Esophagus muscularis mucosa (tissue), 4 donors: ENCODE measurements at regions of chr17 and their contacts with region 1.

Region 1: DNA sequence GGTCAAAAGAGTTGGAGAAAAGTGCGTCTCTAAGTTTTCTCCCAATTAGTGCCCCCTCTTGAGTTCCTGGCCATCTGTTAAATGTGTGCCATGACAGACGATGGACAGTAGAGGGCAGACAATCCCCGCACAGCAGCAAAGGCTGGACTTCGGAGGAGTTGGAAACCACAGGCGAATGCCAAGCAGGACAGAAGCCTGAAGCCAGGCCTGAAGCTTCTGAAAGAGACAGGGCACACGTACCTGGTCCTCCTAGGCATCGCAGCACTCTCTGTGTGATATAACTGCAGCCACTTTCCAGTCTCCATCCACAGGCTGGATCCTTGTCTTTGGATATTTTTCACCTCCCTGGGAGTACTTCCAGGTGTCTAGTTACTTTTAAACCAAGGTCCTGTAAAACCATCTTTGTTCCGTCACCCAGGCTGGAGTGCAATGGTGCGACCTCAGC is 14.5 kb downstream of the C17orf100 start:
- DNase-seq: no peak
- H3K4me3 ChIP-seq: no peak overlapping the region
- H3K27ac ChIP-seq: no peak overlapping the region
- H3K4me1 ChIP-seq: peaks cover 0 to 3% (median 0%) of the 10 kb centered on the region in 4 donors
- H3K27me3 ChIP-seq: peaks cover 0 to 48% (median 0%) of the 10 kb centered on the region in 4 donors
- CTCF ChIP-seq: peak; percentile 82 to 92 (median 88)
- EP300 ChIP-seq: no peak
- POLR2A ChIP-seq: no peak

Region 2: DNA sequence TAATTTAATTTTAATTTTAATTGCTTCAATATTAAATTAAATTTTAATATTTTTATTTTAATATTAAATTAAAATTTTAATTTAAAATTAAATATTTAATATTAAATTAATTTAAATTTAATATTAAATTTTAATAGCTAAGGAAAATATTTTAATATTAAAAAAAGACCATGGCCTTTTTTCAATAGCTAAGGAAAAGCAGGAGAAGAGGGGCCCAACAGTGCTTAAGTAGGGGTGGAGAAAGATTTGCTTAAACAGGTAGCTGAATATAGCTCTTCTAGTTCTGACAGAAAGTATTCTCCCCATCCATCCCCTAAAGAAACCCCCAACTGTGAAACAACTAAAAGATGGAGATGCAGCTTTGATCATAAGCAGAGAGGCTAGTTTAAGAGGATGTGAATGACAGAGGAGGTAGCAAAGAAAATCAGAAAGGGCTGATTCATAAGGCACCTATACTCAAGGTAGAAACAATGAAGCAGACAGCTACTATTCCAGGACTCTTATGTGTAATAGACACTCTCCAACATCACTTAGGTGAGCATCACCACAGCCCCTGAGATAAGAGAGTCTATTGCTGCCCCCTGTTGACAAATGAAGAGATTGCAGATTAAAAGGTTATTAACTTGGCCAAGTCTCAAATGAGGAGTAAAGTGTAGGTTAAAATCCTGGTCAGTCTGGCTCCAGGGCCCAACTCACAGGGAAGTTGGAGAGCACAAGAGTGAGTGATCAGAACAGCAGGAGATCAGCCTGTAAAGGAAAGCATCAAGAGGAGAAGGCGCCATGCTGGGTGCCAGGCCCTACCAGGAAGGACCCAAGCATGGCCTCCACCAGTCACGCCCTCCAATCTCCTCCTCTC is 338.5 kb after region 1 on chr17:
- intact Hi-C with region 1: loop called (anchors 5 kb)
- DNase-seq: no peak
- H3K4me3 ChIP-seq: no peak overlapping the region
- H3K27ac ChIP-seq: no peak overlapping the region
- H3K4me1 ChIP-seq: peaks cover 0 to 21% (median 6%) of the 10 kb centered on the region in 4 donors
- H3K27me3 ChIP-seq: no peaks in the 10 kb centered on the region
- CTCF ChIP-seq: peak; percentile 64 to 77 (median 67)
- EP300 ChIP-seq: no peak
- POLR2A ChIP-seq: no peak